ENCODE measurements at regions of chr22 and their contacts with region 1.

Region 1: DNA sequence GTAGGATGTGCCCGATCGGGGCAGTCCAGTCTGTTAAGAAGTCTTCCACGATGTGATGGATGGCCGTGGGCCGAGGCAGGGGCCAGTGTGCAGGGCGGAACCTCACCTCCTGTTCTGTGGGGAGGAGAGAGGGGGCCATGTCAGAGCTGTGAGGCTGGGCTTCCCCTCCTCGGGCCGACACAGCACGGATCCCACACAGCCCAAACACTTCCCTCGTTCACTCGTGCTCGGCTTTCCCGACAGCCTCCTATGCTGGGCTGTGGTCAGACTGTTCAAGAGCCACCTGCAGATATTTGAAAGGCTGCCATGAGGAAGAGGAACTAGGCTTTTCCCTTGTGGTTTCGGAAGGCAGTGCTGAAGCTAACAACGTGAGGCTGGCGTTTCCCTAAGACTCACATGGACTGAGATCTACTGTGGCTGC is 12.3 kb upstream of the TXN2 start:
- DNase-seq: no peak
- H3K4me3 ChIP-seq: no peak overlapping the region
- H3K27ac ChIP-seq: no peak overlapping the region
- H3K4me1 ChIP-seq: no peaks in the 10 kb centered on the region
- H3K27me3 ChIP-seq: no peaks in the 10 kb centered on the region
- CTCF ChIP-seq: no peak

Region 2: DNA sequence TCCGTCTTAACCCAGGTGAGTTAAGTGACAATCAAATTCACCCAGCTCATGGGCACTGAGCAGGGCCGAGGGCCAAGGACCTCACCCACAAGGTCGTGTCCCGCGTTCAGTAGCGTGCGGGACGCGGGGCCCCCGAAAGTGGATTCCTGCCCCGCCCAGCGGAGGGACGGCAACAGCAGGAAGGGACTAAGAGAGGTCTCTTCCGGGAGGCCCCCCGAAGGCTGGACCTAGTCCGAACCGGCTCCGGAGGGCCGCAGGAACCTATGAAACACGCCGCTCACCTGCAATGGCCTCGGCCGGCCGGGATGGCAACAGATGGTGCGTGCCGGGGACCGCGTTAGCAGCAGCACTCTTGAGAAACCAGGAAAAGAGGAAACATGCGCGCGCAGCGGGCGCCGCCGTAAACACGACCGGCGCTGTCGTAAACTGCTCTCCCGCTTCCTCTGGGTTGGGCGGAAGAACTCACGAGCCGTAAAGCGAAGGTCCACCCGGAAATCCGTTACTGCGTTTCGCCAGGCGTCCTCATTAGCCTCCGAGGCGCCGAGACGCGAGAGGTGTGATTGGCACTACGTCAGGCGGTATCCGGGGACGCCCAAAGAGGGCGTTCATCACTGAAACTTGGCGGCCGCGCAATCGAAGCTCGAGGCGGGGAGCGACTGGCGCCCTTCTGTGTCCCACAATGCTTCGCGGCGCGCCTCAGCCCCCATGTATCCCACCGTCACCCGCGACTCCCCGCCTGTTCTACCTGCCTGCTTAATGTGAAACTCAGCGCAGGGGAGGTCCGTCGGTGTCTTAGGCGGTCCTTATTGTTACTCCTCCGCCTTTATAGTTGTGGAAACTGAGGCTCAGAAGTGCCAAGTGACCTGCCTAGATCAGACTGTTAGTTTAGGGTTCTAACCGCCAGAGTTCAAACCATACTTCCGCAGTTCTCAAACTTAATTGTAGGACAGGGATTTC is 35.4 kb after region 1 on chr22 and contains the start of gene EIF3D:
- CTCF ChIA-PET with region 1: no interaction called
- dilution Hi-C with region 1: loop called (anchors 5 kb)
- in situ Hi-C with region 1: no loop called
- intact Hi-C with region 1: no loop called
- DNase-seq: peak; percentile 100
- H3K4me3 ChIP-seq: peak within 1 kb of the TSS; percentile 85 to 90 (median 86)
- H3K27ac ChIP-seq: peak within 1 kb of the TSS; percentile 97
- H3K4me1 ChIP-seq: peaks cover 19% of the 10 kb centered on the region
- H3K27me3 ChIP-seq: no peaks in the 10 kb centered on the region
- CTCF ChIP-seq: peak in 1 of 2 donors; percentile 0
- total RNA-seq, gene EIF3D: 210 to 354 TPM

Region 3: DNA sequence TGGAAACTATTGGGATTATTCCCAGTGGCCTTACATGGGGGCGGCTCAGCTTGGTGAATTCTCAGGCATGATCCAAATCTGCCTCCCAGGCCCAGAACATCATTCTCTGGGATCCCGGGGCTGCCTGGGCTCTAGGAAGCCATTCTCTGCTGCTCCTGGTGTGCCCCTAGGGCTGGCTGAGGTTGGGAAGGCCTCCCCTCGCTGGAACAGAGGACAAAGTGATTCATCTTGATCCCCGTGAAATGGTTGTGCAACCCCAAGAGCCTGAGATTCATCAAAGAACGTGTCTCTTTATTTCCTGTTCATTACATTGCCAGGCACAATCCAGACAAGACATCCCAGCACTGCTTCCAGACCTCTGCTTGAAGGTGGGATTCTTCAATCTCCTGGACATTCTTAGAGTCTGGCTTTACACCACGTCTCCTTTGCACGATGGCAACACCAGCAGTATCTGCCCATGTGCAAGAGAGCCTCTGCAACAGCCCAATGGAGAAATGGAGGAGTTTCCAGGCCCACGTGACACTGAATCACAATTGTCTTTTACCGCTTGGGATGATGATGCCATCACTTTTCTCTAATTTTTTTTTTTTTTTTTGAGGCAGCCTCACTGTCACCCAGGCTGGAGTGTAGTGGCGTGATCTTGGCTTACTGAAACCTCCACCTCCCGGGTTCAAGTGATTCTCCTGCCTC is 473.3 kb after region 1 on chr22:
- CTCF ChIA-PET with region 1: no interaction called
- dilution Hi-C with region 1: no loop called
- in situ Hi-C with region 1: no loop called
- intact Hi-C with region 1: no loop called
- DNase-seq: peak; percentile 41
- H3K4me3 ChIP-seq: no peak overlapping the region
- H3K27ac ChIP-seq: no peak overlapping the region
- H3K4me1 ChIP-seq: no peaks in the 10 kb centered on the region
- H3K27me3 ChIP-seq: no peaks in the 10 kb centered on the region
- CTCF ChIP-seq: no peak

Region 4: DNA sequence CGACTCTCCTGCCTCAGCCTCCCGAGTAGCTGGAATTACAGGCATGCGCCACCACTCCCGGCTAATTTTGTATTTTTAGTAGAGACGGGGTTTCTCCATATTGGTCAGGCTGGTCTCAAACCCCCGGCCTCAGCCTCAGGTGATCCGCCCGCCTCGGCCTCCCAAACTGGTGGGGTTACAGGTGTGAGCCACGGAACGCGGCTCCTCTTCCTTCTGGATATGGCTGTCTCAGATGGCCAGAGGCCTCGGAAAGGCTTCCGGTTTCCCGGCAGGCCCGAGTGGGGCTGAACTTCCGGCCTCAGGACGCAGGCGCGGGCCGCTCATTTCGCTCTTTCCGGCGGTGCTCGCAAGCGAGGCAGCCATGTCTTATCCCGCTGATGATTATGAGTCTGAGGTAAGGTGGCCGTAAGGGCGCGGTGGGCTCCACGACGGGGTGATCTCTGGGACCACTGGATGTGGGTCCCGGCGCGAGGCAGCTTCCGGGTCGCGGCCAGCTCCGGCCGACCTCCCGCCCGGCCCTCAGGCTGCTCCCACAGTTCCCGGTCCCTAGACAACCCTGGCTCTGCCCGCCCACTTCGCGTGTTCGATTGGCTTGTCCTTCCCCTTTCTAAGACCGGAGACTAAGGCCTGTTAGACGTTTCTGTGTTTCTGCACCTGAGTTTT is 1355.5 kb after region 1 on chr22 and contains the start of gene EIF3L:
- CTCF ChIA-PET with region 1: no interaction called
- dilution Hi-C with region 1: no loop called
- in situ Hi-C with region 1: no loop called
- intact Hi-C with region 1: no loop called
- DNase-seq: peak; percentile 87
- H3K4me3 ChIP-seq: peak within 1 kb of the TSS; percentile 70 to 92 (median 86)
- H3K27ac ChIP-seq: peak within 1 kb of the TSS; percentile 84
- H3K4me1 ChIP-seq: peaks cover 10% of the 10 kb centered on the region
- H3K27me3 ChIP-seq: no peaks in the 10 kb centered on the region
- CTCF ChIP-seq: no peak
- total RNA-seq, gene EIF3L: 350 to 368 TPM